Gastrocnemius medialis (tissue), 4 donors: ENCODE measurements at regions of chr15 and their contacts with region 1.

Region 1: DNA sequence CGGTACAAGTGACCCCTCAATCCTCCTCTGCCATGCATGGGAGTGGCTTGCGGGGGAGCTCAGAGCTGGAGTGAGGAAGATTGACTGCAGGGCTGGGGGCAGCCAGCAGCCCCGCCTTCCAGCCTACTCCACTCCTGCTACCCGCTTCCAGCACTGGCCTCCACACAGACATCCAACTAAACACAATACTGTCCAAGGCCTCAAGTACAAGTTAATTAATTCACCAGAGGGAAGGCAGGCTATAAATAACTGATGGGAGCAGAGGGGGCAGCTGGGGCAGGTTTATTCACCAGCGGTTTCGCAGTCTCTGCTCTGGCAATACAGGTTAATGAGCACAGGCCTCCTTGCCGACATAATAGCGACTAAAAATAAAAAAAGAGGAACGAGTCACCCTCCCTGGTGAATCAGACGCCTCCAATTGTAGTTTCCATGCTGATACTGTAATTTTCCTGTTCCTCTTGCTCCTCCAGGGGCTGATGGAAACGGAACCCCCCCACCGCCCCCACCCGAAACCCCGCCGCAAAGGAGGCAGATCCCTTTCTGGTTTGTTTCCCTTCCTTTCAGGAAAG is 166.4 kb upstream of the TLE3 start:
- DNase-seq: no peak
- ATAC-seq: peak in 1 of 2 donors; percentile 20
- H3K4me3 ChIP-seq: no peak overlapping the region
- H3K27ac ChIP-seq: no peak overlapping the region
- H3K4me1 ChIP-seq: peaks cover 21 to 39% of the 10 kb centered on the region in 2 donors
- H3K27me3 ChIP-seq: no peaks in the 10 kb centered on the region
- CTCF ChIP-seq: no peak
- POLR2A ChIP-seq: no peak

Region 2: DNA sequence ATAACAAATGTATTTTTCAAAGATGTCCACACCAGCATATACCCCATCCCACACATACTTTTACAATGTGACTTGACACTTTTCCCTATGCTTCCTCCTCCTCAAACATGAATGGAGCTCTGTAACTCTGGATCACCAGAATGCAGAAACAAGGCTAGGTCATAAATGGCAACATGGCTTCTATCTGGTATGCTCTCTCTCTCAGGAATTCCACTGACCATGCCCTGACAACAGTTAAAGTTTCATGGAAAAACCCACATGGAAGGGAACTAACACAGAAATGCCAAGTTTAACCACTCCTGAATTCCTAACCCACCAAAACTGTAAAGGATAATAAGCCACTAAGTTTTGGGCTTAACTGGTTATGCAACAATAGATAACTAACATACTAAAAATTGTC is 1833.9 kb after region 1 on chr15:
- in situ Hi-C with region 1: no loop called
- intact Hi-C with region 1: loop called (anchors 10 kb)
- DNase-seq: no peak
- ATAC-seq: no peak
- H3K4me3 ChIP-seq: no peak overlapping the region
- H3K27ac ChIP-seq: no peak overlapping the region
- H3K4me1 ChIP-seq: peaks cover 2% of the 10 kb centered on the region in 2 donors
- H3K27me3 ChIP-seq: no peaks in the 10 kb centered on the region
- CTCF ChIP-seq: no peak
- POLR2A ChIP-seq: no peak